ENCODE measurements at regions of chrX and their contacts with region 1.

Region 1: GRCh38 chrX:30488092-30488491 is 89.5 kb downstream of the TASL start:
- DNase-seq: no peak
- ATAC-seq: no peak
- H3K4me3 ChIP-seq: no peak overlapping the region
- H3K4me3 Mint-ChIP-seq: no peak overlapping the region
- H3K27ac ChIP-seq: no peak overlapping the region
- H3K27ac Mint-ChIP-seq: no peak overlapping the region
- H3K4me1 ChIP-seq: no peaks in the 10 kb centered on the region
- H3K4me1 Mint-ChIP-seq: no peaks in the 10 kb centered on the region
- H3K27me3 ChIP-seq: no peaks in the 10 kb centered on the region
- H3K27me3 Mint-ChIP-seq: no peaks in the 10 kb centered on the region
- CTCF ChIP-seq: no peak

Region 2: GRCh38 chrX:30039768-30040167 is 448.3 kb before region 1 on chrX:
- CTCF ChIA-PET with region 1: no interaction called
- POLR2A ChIA-PET with region 1: no interaction called
- intact Hi-C with region 1: loop called in 1 of 2 experiments (anchors 5 kb)
- DNase-seq: no peak
- ATAC-seq: no peak
- H3K4me3 ChIP-seq: no peak overlapping the region
- H3K4me3 Mint-ChIP-seq: no peak overlapping the region
- H3K27ac ChIP-seq: no peak overlapping the region
- H3K27ac Mint-ChIP-seq: no peak overlapping the region
- H3K4me1 ChIP-seq: no peaks in the 10 kb centered on the region
- H3K4me1 Mint-ChIP-seq: no peaks in the 10 kb centered on the region
- H3K27me3 ChIP-seq: no peaks in the 10 kb centered on the region
- H3K27me3 Mint-ChIP-seq: no peaks in the 10 kb centered on the region
- CTCF ChIP-seq: no peak

Region 3: DNA sequence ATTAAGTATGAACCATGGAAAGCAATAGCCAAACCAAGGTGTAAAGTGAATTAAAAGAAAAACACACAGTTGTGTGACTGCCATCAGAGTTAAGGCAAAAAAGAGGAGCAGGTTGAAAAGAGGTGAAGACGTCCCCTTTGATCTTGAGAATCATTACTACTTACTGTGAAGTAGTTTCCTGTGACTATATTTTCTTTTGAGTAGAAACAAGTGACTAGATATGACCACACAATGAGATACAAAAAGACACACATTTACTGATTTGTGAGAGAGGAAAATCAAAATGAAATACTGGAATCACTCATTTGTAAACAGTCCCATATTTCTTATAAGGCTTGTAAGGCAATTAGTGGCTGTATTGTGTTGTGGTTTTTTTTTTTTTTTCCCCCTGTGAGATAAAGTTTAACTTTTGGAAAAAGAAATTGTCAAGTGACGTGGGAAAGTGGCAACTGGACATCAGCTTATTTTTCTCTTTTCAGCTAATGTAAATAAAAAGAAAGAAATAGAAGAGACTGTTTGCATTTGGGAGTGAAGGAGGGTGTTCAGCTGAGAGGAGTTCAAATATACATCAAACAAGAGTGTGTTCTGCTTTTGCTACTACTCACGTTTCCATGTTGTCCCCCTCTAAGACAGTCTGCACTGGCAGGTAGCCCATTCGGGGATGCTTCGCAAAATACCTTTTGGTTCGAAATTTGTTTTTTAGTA is 690.1 kb after region 1 on chrX:
- CTCF ChIA-PET with region 1: no interaction called
- POLR2A ChIA-PET with region 1: no interaction called
- intact Hi-C with region 1: loop called in 1 of 2 experiments (anchors 10 kb)
- DNase-seq: no peak
- ATAC-seq: no peak
- H3K4me3 ChIP-seq: no peak overlapping the region
- H3K4me3 Mint-ChIP-seq: no peak overlapping the region
- H3K27ac ChIP-seq: no peak overlapping the region
- H3K27ac Mint-ChIP-seq: no peak overlapping the region
- H3K4me1 ChIP-seq: no peaks in the 10 kb centered on the region
- H3K4me1 Mint-ChIP-seq: no peaks in the 10 kb centered on the region
- H3K27me3 ChIP-seq: no peaks in the 10 kb centered on the region
- H3K27me3 Mint-ChIP-seq: no peaks in the 10 kb centered on the region
- CTCF ChIP-seq: no peak